ENCODE measurements at regions of chr7 and their contacts with region 1.

Region 1: GRCh38 chr7:152145853-152146466 is 120.5 kb downstream of the GALNT11 start:
- DNase-seq: peak; percentile 95
- H3K4me3 ChIP-seq: no peak overlapping the region
- H3K27ac ChIP-seq: peak overlapping the region; percentile 40
- H3K4me1 ChIP-seq: peaks cover 25% of the 10 kb centered on the region
- H3K27me3 ChIP-seq: no peaks in the 10 kb centered on the region
- CTCF ChIP-seq: peak; percentile 61 to 75
- POLR2A ChIP-seq: no peak

Region 2: GRCh38 chr7:151754142-151754590 is 391.8 kb before region 1 on chr7:
- CTCF ChIA-PET with region 1: interaction called, 3 read pairs
- POLR2A ChIA-PET with region 1: no interaction called
- dilution Hi-C with region 1: no loop called
- intact Hi-C with region 1: loop called (anchors 1 kb)
- DNase-seq: peak; percentile 97
- H3K4me3 ChIP-seq: no peak overlapping the region
- H3K27ac ChIP-seq: peak overlapping the region; percentile 83
- H3K4me1 ChIP-seq: peaks cover 18% of the 10 kb centered on the region
- H3K27me3 ChIP-seq: no peaks in the 10 kb centered on the region
- CTCF ChIP-seq: peak; percentile 97 to 99
- POLR2A ChIP-seq: peak; percentile 66

Region 3: GRCh38 chr7:151876899-151877777 is 268.8 kb before region 1 on chr7 and contains the start of gene PRKAG2:
- CTCF ChIA-PET with region 1: no interaction called
- POLR2A ChIA-PET with region 1: no interaction called
- dilution Hi-C with region 1: no loop called
- intact Hi-C with region 1: loop called (anchors 5 kb)
- DNase-seq: peak; percentile 40
- H3K4me3 ChIP-seq: peak within 1 kb of the TSS; percentile 41 to 69 (median 48)
- H3K27ac ChIP-seq: no peak within 1 kb of the TSS
- H3K4me1 ChIP-seq: peaks cover 11% of the 10 kb centered on the region
- H3K27me3 ChIP-seq: peaks cover 27 to 37% of the 10 kb centered on the region in 2 experiments
- CTCF ChIP-seq: no peak
- POLR2A ChIP-seq: no peak
- total RNA-seq, gene PRKAG2: 45.1 and 51.5 TPM in 2 replicates

Region 4: DNA sequence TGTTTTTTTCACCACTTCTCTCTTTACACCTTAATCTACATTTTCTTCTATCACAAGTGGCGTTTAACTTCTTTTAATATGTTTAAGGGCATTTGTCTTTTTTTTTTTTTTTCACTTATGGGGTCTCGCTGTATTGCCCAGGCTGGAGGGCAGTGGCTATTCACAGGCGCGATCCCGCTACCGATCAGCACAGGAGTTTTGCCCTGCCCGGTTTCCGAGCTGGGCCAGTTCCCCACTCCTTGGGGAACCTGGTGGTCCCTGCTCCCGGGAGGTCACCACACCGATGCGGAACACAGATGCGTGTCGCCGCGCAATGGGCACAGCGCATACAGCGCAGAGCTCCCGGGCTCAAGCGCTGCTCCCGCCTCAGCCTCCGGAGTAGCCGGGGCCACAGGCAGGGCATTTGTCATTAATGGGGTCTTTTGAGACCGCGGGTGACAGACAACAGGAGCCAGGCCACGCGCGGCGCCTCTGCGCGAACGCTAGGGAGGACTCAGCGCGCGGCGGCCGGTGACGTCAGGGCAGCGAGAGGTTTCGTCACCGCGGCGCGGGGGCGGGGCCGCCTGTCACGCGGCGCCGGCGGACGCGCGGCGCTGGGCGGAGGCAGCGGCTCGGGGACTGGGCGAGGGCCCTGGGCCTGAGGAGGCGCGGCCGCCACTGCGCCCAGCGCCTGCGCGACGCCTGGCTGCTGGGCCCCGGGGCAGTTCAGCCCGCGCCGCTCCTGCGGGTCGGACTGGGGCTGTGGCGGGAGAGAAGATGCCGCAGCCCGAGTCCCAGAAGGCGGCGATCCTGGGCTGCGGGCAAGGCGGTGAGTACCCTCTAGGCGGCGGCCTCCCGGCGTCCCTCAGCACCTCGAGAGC is 120.7 kb before region 1 on chr7 and contains the start of gene GALNT11:
- CTCF ChIA-PET with region 1: no interaction called
- POLR2A ChIA-PET with region 1: no interaction called
- dilution Hi-C with region 1: no loop called
- intact Hi-C with region 1: loop called (anchors 1 kb)
- DNase-seq: peak; percentile 84
- H3K4me3 ChIP-seq: peak within 1 kb of the TSS; percentile 76 to 80 (median 76)
- H3K27ac ChIP-seq: peak within 1 kb of the TSS; percentile 27
- H3K4me1 ChIP-seq: peaks cover 6% of the 10 kb centered on the region
- H3K27me3 ChIP-seq: peaks cover 0 to 2% of the 10 kb centered on the region in 2 experiments
- CTCF ChIP-seq: peak; percentile 8 to 52
- POLR2A ChIP-seq: peak; percentile 91
- total RNA-seq, gene GALNT11: 27.6 and 27.7 TPM in 2 replicates

Region 5: DNA sequence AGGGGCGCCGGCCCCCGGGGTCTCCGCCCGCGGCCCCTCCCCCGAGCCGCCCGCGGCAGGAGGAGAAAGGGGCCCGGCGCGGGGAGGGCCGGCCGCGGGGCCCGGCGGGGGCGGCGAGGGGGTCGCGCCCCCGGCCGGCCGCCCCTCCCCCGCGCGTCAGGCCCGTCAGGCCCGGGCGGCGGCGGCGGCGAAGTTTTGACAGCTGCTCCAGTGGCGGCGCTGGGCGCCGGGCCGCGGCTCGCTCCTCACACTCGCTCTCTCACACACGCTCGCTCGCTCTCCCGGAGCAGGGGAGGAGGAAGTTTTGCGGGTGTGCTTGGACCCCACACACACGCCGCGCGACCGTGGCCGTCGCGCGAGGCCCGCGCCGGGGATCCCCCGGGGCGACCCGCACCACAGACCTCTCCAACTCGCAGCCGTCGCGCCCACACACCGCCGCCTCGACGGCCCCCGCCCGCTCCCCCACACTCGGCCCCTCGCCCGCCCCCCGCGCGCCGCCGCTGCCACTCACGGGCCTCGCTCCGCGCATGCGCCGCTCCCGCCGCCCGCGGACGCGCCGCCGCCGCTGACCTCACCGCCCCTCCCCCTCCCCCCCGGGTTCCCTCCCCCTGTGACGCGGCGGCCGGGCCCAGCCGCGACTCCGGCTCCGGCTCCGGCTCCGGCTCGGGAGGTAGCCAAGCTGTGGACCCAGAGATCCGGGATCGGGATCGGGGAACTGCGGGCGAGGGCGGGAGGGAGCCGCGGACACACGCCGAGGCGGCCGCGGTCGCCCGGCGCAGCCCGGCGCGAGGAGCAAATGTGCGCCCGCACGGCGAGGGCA is 290.4 kb after region 1 on chr7:
- CTCF ChIA-PET with region 1: no interaction called
- POLR2A ChIA-PET with region 1: no interaction called
- dilution Hi-C with region 1: no loop called
- intact Hi-C with region 1: loop called (anchors 10 kb)
- DNase-seq: peak; percentile 91
- H3K4me3 ChIP-seq: peak overlapping the region in 2 of 3 experiments; percentile 47 to 92
- H3K27ac ChIP-seq: peak overlapping the region; percentile 72
- H3K4me1 ChIP-seq: peaks cover 9% of the 10 kb centered on the region
- H3K27me3 ChIP-seq: no peaks in the 10 kb centered on the region
- CTCF ChIP-seq: no peak
- POLR2A ChIP-seq: no peak

Region 6: DNA sequence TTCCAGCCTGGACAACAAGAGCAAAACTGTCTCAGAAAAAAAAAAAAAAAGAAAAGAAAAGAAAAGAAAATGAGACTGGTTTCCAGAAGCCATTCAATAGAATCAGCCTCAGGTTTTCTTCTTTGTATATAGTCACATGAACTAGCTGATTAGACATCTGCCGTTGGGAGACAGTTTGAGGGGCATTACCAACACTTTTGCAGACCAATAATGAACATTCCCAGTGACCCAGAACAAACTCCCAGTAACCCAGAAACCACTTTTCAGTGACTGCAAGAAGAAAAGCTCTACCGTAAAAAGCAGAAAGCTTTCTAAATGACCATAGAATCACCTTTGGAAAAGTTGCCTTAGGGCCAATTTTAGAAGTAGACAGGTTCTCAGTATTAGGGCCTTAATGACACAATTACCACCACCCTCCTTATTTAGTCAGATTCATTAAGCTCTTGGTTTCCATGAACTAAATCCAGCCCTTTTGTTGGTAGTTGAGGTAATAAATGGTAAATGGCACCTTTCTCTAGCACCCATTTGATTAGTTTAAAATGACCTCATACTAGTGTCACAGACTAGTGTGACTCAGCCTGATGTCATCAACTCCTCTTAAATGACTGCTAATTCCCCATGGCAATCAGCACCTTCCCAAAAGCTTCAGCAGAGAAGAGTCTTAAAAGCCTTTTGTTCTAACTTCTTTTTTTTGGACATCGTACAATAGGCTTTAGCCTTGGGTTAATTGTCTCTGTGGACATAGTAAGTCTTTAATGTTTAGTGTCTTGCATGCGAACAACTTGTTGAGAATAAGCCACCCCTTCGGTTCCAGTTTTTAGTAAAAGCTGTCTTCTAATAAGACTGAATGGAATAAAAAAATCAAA is 563.6 kb after region 1 on chr7:
- CTCF ChIA-PET with region 1: interaction called, 3 read pairs
- POLR2A ChIA-PET with region 1: no interaction called
- dilution Hi-C with region 1: no loop called
- intact Hi-C with region 1: loop called (anchors 2 kb)
- DNase-seq: no peak
- H3K4me3 ChIP-seq: no peak overlapping the region
- H3K27ac ChIP-seq: no peak overlapping the region
- H3K4me1 ChIP-seq: no peaks in the 10 kb centered on the region
- H3K27me3 ChIP-seq: no peaks in the 10 kb centered on the region
- CTCF ChIP-seq: no peak
- POLR2A ChIP-seq: no peak

Measured in endothelial cell of umbilical vein (primary cell).